ENCODE measurements at regions of chr9 and their contacts with region 1.

Region 1: GRCh38 chr9:96654443-96655197 is 497 bp downstream of the PRXL2C start:
- DNase-seq: peak; percentile 56
- H3K4me3 Mint-ChIP-seq: peak overlapping the region; percentile 80
- H3K27ac Mint-ChIP-seq: peak overlapping the region; percentile 89
- H3K4me1 Mint-ChIP-seq: peaks cover 11% of the 10 kb centered on the region
- H3K27me3 Mint-ChIP-seq: no peaks in the 10 kb centered on the region
- CTCF ChIP-seq: no peak

Region 2: DNA sequence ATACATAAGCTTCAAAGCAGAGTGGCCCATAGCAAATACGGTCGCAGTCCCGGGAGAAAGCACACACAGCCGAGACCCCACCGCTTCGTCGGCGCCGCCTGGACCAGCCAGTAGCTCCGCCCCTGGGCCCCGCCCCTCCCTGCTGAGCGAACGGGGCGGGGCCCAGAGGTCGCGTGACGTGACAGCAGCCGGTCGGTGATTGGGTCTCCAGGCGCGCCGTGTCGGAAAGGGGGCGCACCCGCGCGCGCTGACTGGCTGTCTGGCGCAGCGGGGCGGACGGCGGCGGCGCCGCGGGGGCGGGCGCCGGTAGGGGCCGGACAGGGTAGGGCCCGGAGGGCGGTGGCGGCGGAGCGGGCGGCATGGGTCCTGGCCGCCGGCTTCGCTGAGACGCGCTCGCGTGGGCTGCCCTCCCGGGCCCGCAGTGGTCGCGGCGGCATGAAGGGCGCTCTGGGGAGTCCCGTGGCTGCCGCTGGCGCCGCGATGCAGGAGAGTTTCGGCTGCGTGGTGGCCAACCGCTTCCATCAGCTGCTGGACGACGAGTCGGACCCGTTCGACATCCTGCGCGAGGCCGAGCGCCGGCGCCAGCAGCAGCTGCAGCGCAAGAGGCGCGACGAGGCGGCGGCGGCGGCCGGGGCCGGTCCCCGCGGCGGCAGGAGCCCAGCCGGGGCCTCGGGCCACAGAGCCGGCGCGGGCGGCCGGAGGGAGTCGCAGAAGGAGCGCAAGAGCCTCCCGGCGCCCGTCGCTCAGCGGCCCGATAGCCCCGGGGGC is 204.6 kb before region 1 on chr9 and contains the start of gene HABP4:
- CTCF ChIA-PET with region 1: no interaction called
- intact Hi-C with region 1: loop called (anchors 10 kb)
- DNase-seq: peak; percentile 94
- H3K4me3 Mint-ChIP-seq: peak within 1 kb of the TSS; percentile 66
- H3K27ac Mint-ChIP-seq: peak within 1 kb of the TSS; percentile 64
- H3K4me1 Mint-ChIP-seq: peaks cover 17% of the 10 kb centered on the region
- H3K27me3 Mint-ChIP-seq: no peaks in the 10 kb centered on the region
- CTCF ChIP-seq: no peak
- total RNA-seq, gene HABP4: 9.8 and 11.6 TPM in 2 replicates

Region 3: DNA sequence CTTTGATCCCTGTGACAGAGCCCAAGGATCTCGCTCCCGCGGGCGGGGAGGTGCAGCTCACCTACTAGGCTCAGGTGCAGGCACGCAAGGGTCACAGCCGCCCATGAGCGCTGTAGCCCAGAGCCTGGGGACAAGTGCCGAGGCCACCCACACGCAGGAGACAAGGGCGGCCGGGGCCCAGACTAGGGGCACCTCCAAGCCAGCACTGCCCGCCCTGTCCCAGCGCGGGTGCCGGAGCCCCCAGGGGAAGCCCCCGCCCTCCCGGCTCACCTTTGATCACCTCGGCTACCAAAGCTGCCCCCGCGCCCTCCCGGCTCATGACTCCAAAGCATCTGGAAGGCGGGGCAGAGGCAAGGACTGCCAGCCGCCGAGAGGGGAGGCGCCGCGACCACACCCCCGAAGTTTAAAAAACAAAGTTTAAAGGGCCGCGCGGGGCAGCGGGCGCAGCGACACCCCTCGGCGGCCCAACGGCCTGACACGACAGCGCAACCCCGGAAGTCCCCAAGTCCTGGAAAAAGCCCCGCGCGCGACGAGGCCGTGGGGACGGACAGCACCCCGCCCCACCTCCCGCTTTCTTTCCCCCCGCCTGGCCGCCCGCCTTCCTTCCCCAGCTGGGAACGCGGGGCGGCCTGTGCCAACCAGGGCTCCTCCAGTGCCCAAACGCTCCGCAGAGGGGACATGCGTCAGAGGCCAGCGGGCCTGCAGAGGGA is 88.0 kb before region 1 on chr9:
- CTCF ChIA-PET with region 1: no interaction called
- intact Hi-C with region 1: loop called (anchors 10 kb)
- DNase-seq: peak; percentile 70
- H3K4me3 Mint-ChIP-seq: peak overlapping the region; percentile 80
- H3K27ac Mint-ChIP-seq: no peak overlapping the region
- H3K4me1 Mint-ChIP-seq: peaks cover 8% of the 10 kb centered on the region
- H3K27me3 Mint-ChIP-seq: no peaks in the 10 kb centered on the region
- CTCF ChIP-seq: peak; percentile 26

Region 4: GRCh38 chr9:96619491-96620154 is 35.0 kb before region 1 on chr9 and contains the start of gene CDC14B:
- CTCF ChIA-PET with region 1: no interaction called
- intact Hi-C with region 1: loop called (anchors 5 kb)
- DNase-seq: peak; percentile 92
- H3K4me3 Mint-ChIP-seq: peak within 1 kb of the TSS; percentile 76
- H3K27ac Mint-ChIP-seq: peak within 1 kb of the TSS; percentile 85
- H3K4me1 Mint-ChIP-seq: peaks cover 26% of the 10 kb centered on the region
- H3K27me3 Mint-ChIP-seq: no peaks in the 10 kb centered on the region
- CTCF ChIP-seq: no peak
- total RNA-seq, gene CDC14B: 26.4 and 29.8 TPM in 2 replicates

Region 5: DNA sequence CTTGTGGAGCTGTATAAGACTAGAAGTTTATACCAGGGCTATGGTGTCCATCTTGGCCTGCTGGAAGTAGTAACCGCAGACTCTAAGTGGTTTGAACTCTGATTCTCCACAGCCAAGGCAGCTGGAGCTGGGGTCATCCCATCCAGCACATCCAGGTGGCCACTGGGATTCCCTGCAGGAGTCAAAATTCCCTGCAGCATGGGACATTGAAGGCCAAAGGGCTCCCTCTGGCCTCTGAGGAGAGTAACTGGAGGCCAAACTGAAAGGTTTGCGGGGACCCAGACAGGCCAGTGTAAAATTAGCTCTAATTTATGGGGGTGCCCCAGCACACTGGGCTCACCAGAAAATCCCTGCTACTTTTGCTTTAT is 12.7 kb after region 1 on chr9:
- CTCF ChIA-PET with region 1: no interaction called
- intact Hi-C with region 1: no loop called
- DNase-seq: no peak
- H3K4me3 Mint-ChIP-seq: no peak overlapping the region
- H3K27ac Mint-ChIP-seq: no peak overlapping the region
- H3K4me1 Mint-ChIP-seq: no peaks in the 10 kb centered on the region
- H3K27me3 Mint-ChIP-seq: no peaks in the 10 kb centered on the region
- CTCF ChIP-seq: no peak

Region 6: GRCh38 chr9:96818535-96818934 is 163.9 kb after region 1 on chr9:
- CTCF ChIA-PET with region 1: no interaction called
- intact Hi-C with region 1: no loop called
- DNase-seq: no peak
- H3K4me3 Mint-ChIP-seq: no peak overlapping the region
- H3K27ac Mint-ChIP-seq: no peak overlapping the region
- H3K4me1 Mint-ChIP-seq: no peaks in the 10 kb centered on the region
- H3K27me3 Mint-ChIP-seq: no peaks in the 10 kb centered on the region
- CTCF ChIP-seq: no peak

Measured in Calu3 (cell line).